Activated CD8-positive, alpha-beta T cell treated with anti-CD3 and anti-CD28 coated beads for 36 hours (primary cell): ENCODE measurements at regions of chrX and their contacts with region 1.

Region 1: GRCh38 chrX:108020631-108021030 is 24.2 kb upstream of the VSIG1 start:
- DNase-seq: peak; percentile 21
- ATAC-seq: peak; percentile 48
- H3K4me3 Mint-ChIP-seq: peak overlapping the region; percentile 41
- H3K27ac Mint-ChIP-seq: peak overlapping the region; percentile 83
- H3K4me1 Mint-ChIP-seq: peaks cover 64% of the 10 kb centered on the region
- H3K27me3 Mint-ChIP-seq: no peaks in the 10 kb centered on the region
- CTCF ChIP-seq: peak; percentile 15

Region 2: DNA sequence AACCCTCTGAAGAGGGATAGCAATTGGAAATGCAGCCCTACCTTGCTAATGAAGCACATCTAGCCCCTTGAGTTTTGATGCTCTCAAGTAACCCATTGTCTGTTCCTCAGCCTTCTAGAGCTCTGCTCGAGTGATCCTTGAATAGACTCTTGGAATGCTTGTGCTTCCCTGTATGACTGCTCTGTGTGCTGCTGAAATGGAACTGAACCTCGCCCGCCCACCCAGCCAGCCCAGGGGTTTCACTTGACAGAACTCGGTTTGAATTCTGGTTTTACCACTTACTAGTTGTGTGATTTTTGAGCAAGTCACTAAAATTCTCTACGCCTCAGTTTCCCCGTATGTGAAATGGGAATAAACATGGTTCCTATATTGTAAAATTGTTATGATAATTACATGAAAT is 117.9 kb before region 1 on chrX:
- CTCF ChIA-PET with region 1: no interaction called
- POLR2A ChIA-PET with region 1: no interaction called
- intact Hi-C with region 1: no loop called
- DNase-seq: no peak
- ATAC-seq: no peak
- H3K4me3 Mint-ChIP-seq: no peak overlapping the region
- H3K27ac Mint-ChIP-seq: no peak overlapping the region
- H3K4me1 Mint-ChIP-seq: no peaks in the 10 kb centered on the region
- H3K27me3 Mint-ChIP-seq: no peaks in the 10 kb centered on the region
- CTCF ChIP-seq: no peak

Region 3: DNA sequence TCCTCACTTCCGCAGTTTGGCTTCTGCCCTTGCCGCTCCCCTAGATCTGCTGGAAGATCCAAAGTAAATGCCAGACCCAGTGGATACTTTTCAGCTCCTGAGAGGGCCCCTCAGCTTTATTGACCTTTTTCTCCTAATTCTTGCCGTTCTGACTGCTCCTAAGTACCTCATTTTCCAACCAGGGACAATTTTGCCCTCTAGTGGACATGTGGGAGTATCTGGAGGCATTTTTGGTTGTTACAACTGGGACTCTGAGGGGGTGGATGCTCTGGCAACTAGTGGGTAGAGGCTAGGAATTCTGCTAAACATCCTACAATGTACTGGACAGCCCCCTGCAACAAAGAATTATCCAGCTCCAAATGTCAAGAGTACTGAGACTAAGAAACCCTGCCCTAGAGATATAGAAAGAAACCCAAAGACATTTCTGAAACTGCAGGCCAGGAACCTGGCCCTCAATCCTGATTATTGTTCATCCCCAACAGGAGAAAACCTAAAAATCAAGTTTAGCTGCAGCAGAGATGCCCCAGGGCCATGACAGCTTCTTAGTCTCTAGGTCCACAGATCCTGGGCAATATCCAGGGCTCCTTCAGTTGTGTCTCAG is 41.8 kb before region 1 on chrX:
- CTCF ChIA-PET with region 1: no interaction called
- POLR2A ChIA-PET with region 1: no interaction called
- intact Hi-C with region 1: no loop called
- DNase-seq: no peak
- ATAC-seq: no peak
- H3K4me3 Mint-ChIP-seq: no peak overlapping the region
- H3K27ac Mint-ChIP-seq: no peak overlapping the region
- H3K4me1 Mint-ChIP-seq: peaks cover 2% of the 10 kb centered on the region
- H3K27me3 Mint-ChIP-seq: no peaks in the 10 kb centered on the region
- CTCF ChIP-seq: peak; percentile 22

Region 4: DNA sequence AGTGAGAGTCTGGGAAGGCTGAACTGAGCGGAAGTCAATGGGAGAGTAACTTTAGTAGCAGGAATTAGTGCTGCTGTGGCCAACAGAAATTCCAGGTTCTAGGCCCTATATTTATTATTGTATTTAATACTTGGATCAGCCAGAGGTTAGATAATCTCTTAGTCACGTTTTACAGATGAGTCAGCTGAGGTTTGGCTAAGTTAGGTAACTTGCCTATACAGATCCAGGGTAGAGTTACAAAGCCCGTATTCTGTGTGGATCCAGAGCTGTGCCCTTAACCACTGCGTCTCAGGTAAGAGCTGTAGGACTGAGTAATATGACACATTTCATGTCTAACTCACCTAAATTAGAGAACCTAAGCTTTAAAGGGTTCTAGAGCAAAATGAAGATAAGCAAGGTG is 50.3 kb after region 1 on chrX:
- CTCF ChIA-PET with region 1: interaction called, 23 read pairs
- POLR2A ChIA-PET with region 1: interaction called, 8 read pairs
- intact Hi-C with region 1: loop called (anchors 5 kb)
- DNase-seq: no peak
- ATAC-seq: no peak
- H3K4me3 Mint-ChIP-seq: no peak overlapping the region
- H3K27ac Mint-ChIP-seq: no peak overlapping the region
- H3K4me1 Mint-ChIP-seq: peaks cover 4% of the 10 kb centered on the region
- H3K27me3 Mint-ChIP-seq: no peaks in the 10 kb centered on the region
- CTCF ChIP-seq: no peak

Region 5: DNA sequence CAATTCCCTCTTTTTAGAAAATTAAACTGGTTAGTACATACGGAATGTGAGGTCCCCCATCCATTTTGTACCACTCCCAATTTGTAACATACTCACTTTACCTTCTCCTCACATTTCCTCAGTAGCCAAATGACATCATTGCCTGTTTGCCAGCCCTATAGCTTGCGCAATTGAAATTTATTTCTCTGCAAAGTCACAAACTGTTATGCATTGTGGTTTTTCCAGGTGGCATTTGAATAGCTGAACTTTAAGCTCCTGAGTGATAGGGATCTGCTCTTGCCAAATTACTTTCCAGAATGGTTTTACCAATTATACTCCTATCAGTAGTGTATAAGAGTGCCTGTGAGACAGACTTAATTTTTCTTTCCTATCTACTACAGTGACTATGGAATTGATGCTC is 426.7 kb after region 1 on chrX:
- CTCF ChIA-PET with region 1: no interaction called
- POLR2A ChIA-PET with region 1: no interaction called
- intact Hi-C with region 1: no loop called
- DNase-seq: no peak
- ATAC-seq: no peak
- H3K4me3 Mint-ChIP-seq: no peak overlapping the region
- H3K27ac Mint-ChIP-seq: no peak overlapping the region
- H3K4me1 Mint-ChIP-seq: no peaks in the 10 kb centered on the region
- H3K27me3 Mint-ChIP-seq: peaks cover 2% of the 10 kb centered on the region
- CTCF ChIP-seq: no peak